A673 (cell line): ENCODE measurements at regions of chr9 and their contacts with region 1.

Region 1: DNA sequence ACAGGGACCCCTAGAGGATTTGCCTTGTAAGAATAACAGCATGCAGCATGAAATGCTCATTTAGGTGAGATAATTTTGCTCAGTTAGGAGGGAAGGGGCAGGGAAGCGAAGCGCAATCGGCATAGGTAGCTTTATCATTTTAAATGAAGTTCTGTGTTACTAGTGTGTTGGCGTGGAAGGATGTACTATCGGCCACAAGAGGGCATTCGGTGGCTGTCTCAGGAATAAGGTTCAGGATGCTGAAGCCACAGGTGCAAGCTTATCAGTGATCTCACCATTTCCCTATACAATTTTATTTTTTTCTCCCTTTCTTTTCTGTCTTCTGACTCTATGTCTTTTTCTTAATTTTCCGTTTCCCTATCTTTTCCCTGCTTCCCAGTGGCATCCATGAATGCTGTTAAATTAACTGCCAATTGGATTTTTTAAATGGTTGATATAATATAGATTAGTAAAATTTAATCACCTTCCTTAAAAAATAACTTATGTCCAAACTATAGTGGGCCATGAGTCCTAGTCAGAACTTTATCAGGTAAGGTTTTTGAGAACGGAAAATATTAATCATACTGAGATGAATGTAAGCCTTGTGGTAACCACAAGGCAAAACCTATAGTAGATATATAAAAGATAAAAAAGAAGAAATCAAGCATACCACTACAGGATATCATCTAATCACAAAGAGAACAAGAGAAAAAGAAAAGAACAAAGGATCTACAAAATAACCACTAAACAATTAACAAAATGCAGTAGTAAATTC is 1.2 kb upstream of the INSL6 start:
- DNase-seq: peak; percentile 62
- H3K4me3 ChIP-seq: no peak overlapping the region
- H3K27ac ChIP-seq: no peak overlapping the region
- H3K4me1 ChIP-seq: no peaks in the 10 kb centered on the region
- H3K27me3 ChIP-seq: no peaks in the 10 kb centered on the region
- CTCF ChIP-seq: peak; percentile 84

Region 2: DNA sequence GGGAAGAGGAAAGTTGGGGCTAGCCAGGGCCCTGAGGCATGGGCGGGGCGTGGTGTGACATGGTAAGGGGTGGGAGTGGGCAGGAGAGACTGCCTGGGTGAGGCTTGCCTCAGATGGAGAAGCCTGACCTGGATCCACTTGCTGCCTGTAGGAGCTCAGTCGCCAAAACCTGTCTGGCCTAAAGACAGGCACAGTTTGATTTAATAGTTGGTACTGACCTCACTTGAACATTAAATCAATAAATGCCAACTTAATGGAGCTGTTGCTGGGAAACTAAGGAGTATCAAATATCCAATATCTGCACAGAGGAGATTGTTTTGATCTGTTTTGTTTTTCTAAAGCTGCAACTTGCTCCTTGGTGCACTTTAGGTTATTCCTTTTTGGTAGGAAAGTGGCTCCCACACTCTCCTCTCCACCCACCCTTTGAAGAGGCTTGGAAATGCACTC is 307.5 kb before region 1 on chr9:
- CTCF ChIA-PET with region 1: no interaction called
- POLR2A ChIA-PET with region 1: no interaction called
- intact Hi-C with region 1: no loop called
- DNase-seq: no peak
- H3K4me3 ChIP-seq: no peak overlapping the region
- H3K27ac ChIP-seq: no peak overlapping the region
- H3K4me1 ChIP-seq: no peaks in the 10 kb centered on the region
- H3K27me3 ChIP-seq: no peaks in the 10 kb centered on the region
- CTCF ChIP-seq: no peak

Region 3: DNA sequence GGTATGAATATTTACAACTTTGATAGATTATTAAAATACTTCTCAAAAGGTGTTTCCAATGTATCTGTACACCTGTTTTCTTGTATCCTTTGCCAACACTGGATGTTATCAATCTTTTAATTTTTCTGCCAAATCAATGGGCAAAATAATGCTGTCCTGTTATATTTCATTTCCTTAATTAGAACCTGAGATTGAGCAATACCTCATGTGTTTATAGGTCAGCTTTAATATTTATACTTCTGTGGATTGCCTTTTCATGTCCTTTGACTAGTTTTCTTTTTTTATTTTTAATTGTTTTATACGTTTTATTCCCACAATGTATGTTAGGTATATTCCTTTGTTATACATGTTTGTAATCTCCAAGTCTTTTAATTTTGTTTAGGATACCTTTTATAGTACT is 124.0 kb before region 1 on chr9:
- CTCF ChIA-PET with region 1: no interaction called
- POLR2A ChIA-PET with region 1: no interaction called
- intact Hi-C with region 1: no loop called
- DNase-seq: no peak
- H3K4me3 ChIP-seq: no peak overlapping the region
- H3K27ac ChIP-seq: no peak overlapping the region
- H3K4me1 ChIP-seq: no peaks in the 10 kb centered on the region
- H3K27me3 ChIP-seq: no peaks in the 10 kb centered on the region
- CTCF ChIP-seq: no peak

Region 4: GRCh38 chr9:5596173-5596572 is 409.6 kb after region 1 on chr9:
- CTCF ChIA-PET with region 1: interaction called, 14 read pairs
- POLR2A ChIA-PET with region 1: no interaction called
- intact Hi-C with region 1: no loop called
- DNase-seq: peak; percentile 75
- H3K4me3 ChIP-seq: no peak overlapping the region
- H3K27ac ChIP-seq: no peak overlapping the region
- H3K4me1 ChIP-seq: peaks cover 8% of the 10 kb centered on the region
- H3K27me3 ChIP-seq: no peaks in the 10 kb centered on the region
- CTCF ChIP-seq: no peak